Gastrocnemius medialis (tissue), 4 donors: ENCODE measurements at regions of chr14 and their contacts with region 1.

Region 1: DNA sequence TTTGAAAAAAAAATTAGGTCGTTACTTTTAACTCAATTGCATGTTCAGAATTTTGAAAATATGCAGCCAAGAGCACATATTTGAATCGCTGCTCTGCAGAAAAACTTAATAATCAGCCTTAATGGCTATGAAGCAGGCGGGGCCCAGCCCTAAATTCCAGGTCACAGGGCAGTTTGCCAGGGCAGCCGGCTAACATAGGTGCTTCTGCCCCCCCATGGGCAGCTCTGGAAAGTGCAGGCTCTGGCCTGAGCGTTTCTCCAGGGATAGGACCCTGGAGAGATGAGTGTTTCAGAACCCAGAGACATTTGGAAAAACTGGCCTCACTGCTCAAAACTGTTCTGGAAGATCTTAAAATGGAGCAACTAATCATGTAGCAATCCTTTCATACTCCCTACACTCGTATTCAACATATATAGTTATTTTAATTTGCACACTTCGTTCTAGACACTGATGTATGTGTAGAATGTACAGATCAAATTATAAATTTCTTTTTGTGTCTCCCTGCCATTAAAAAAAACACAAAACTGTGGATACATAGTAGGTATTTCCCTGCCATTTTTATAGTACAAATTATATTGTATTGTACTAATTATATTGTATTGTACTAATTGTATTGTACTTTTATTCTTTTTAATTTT is 26.0 kb upstream of the PTGR2 start:
- DNase-seq: peak; percentile 82 to 88
- ATAC-seq: peak; percentile 93 to 97
- H3K4me3 ChIP-seq: no peak overlapping the region
- H3K27ac ChIP-seq: no peak overlapping the region
- H3K4me1 ChIP-seq: peaks cover 3 to 7% of the 10 kb centered on the region in 2 donors
- H3K27me3 ChIP-seq: no peaks in the 10 kb centered on the region
- CTCF ChIP-seq: peak; percentile 91 to 96 (median 93)
- POLR2A ChIP-seq: no peak

Region 2: DNA sequence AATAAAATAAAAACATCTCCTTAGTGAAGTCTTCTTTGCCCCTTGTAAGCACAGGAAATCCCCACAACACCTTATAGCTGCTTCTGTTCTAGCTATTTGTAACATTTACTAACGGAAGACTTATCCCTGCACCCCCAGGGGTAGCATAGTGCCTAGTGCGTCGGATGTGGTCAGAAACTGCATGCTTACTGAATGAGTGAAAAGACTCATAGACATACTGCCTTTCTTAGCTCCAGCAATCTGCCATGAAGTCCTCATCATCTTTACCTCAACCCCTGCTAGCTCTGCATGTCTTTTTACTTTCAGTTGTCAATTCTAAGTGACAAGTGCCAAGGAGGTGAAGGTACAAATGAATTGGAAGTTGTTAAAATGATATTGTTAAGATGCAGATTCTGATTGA is 322.0 kb before region 1 on chr14:
- in situ Hi-C with region 1: loop called in 1 of 4 experiments (anchors 25 kb)
- intact Hi-C with region 1: no loop called
- DNase-seq: no peak
- ATAC-seq: no peak
- H3K4me3 ChIP-seq: no peak overlapping the region
- H3K27ac ChIP-seq: no peak overlapping the region
- H3K4me1 ChIP-seq: no peaks in the 10 kb centered on the region
- H3K27me3 ChIP-seq: no peaks in the 10 kb centered on the region
- CTCF ChIP-seq: no peak
- POLR2A ChIP-seq: no peak

Region 3: GRCh38 chr14:73633116-73634010 is 192.3 kb before region 1 on chr14:
- in situ Hi-C with region 1: no loop called
- intact Hi-C with region 1: loop called (anchors 1 kb)
- DNase-seq: peak; percentile 24 to 65
- ATAC-seq: peak; percentile 81 to 82
- H3K4me3 ChIP-seq: peak overlapping the region; percentile 69 to 80 (median 71)
- H3K27ac ChIP-seq: peak overlapping the region; percentile 80 to 83 (median 82)
- H3K4me1 ChIP-seq: peaks cover 5 to 11% of the 10 kb centered on the region in 2 donors
- H3K27me3 ChIP-seq: no peaks in the 10 kb centered on the region
- CTCF ChIP-seq: peak; percentile 86 to 94 (median 88)
- POLR2A ChIP-seq: no peak

Region 4: GRCh38 chr14:73785873-73786695 is 39.6 kb before region 1 on chr14:
- in situ Hi-C with region 1: no loop called
- intact Hi-C with region 1: loop called (anchors 5 kb)
- DNase-seq: peak; percentile 83 to 86
- ATAC-seq: peak; percentile 82 to 88
- H3K4me3 ChIP-seq: peak overlapping the region; percentile 70 to 84 (median 78)
- H3K27ac ChIP-seq: peak overlapping the region; percentile 90 to 97 (median 96)
- H3K4me1 ChIP-seq: peaks cover 69% of the 10 kb centered on the region in 2 donors
- H3K27me3 ChIP-seq: no peaks in the 10 kb centered on the region
- CTCF ChIP-seq: peak; percentile 46 to 66 (median 58)
- POLR2A ChIP-seq: peak; percentile 69 to 77

Region 5: DNA sequence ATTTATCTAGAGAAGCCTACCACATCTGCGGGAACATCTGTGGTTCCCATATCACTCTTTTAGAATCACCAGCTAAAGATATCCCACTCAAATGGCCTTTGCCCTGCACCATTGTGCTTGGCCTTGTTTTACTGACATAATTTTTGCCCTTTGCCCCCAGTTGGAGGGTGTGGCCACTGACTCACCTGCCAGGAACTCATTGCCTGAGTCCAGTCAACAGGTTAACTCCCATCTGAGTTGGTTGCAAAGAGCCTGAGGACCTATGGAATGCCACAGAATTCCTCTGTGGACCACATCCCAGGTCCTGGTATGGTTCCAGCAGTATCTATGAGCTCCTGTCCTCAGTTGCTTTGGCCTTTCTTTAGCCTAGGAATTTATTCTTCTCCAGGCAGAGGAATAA is 29.7 kb before region 1 on chr14:
- in situ Hi-C with region 1: no loop called
- intact Hi-C with region 1: loop called (anchors 2 kb)
- DNase-seq: no peak
- ATAC-seq: no peak
- H3K4me3 ChIP-seq: no peak overlapping the region
- H3K27ac ChIP-seq: no peak overlapping the region
- H3K4me1 ChIP-seq: peaks cover 15 to 27% of the 10 kb centered on the region in 2 donors
- H3K27me3 ChIP-seq: no peaks in the 10 kb centered on the region
- CTCF ChIP-seq: no peak
- POLR2A ChIP-seq: no peak